ENCODE measurements at regions of chr3 and their contacts with region 1.

Region 1: GRCh38 chr3:132034486-132035464 is at the start of gene CPNE4:
- H3K4me3 ChIP-seq: peak within 1 kb of the TSS; percentile 45
- H3K27ac ChIP-seq: no peak within 1 kb of the TSS
- H3K4me1 ChIP-seq: no peaks in the 10 kb centered on the region; the same call in 1 of the 2 replicates
- CTCF ChIP-seq: peak; percentile 75; the same call in 1 of the 2 replicates

Region 2: GRCh38 chr3:131960324-131960723 is 74.5 kb before region 1 on chr3:
- CTCF ChIA-PET with region 1: no interaction called
- POLR2A ChIA-PET with region 1: no interaction called
- H3K4me3 ChIP-seq: no peak overlapping the region
- H3K27ac ChIP-seq: no peak overlapping the region
- H3K4me1 ChIP-seq: no peaks in the 10 kb centered on the region
- CTCF ChIP-seq: no peak

Region 3: GRCh38 chr3:132047209-132047608 is 12.4 kb after region 1 on chr3:
- CTCF ChIA-PET with region 1: interaction called, 10 read pairs
- POLR2A ChIA-PET with region 1: no interaction called
- H3K4me3 ChIP-seq: no peak overlapping the region
- H3K27ac ChIP-seq: no peak overlapping the region
- H3K4me1 ChIP-seq: no peaks in the 10 kb centered on the region
- CTCF ChIP-seq: no peak

Region 4: DNA sequence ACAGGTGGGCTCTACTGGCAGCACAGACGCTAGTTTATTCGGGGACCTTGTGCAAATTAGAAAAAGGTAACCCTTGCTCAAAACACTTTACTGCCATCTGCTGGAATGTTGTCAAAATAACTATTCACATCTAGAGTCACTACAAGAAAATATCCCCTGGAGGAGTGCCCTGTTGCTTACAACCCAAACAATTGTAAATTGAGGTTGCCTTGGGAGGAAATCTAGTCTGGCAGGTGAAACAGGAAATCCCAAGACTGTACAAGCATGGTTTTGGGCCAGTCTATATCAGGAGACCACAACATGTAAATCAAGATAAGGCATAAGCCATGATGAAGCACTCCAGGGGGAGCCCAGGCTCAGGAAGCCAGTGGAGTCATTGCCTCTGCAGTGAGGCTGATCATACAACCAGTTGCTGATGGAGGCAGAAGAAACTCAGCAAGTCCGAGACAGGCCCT is 145.6 kb after region 1 on chr3:
- CTCF ChIA-PET with region 1: interaction called, 31 read pairs
- POLR2A ChIA-PET with region 1: no interaction called
- H3K4me3 ChIP-seq: no peak overlapping the region
- H3K27ac ChIP-seq: no peak overlapping the region
- H3K4me1 ChIP-seq: no peaks in the 10 kb centered on the region
- CTCF ChIP-seq: peak; percentile 49

Region 5: DNA sequence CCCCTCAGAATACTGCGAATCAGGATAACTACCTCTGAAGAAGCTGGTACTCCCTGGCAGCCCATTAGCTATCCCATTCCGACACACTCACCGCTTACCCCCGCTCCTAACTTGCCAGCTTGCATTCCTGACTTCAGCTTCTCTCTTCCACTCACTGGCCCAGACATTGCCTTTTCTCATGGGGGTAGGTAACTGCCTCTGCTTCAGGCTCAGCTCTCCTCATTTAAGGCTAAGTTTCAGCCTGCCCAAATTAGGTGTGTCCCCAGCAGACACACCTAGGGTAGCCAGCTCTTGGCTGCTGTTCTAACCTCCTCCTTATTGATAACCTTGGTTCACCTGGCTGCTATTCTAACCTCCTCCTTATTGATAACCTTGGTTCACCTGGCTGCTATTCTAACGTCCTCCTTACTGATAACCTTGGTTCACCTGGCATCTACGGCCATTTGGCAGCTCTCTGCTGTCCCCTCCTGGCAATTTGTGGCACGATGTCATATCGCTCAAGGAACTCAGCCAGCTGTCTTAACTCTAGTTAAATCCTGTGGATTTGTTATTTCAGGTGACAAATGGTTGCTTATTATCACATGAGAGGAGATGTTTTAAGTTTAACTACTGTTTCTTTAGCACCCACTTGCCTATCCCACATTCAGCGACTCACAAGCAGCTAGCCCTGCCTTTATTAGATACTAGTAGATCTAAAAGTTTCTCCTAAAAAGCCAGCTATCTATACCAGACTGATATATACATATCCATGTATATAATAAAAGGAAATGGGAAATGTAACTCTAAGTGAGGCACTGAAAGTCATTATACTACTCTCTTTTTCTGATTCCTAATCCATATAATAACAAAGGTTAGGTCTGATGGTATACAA is 175.9 kb after region 1 on chr3:
- CTCF ChIA-PET with region 1: interaction called, 16 read pairs
- POLR2A ChIA-PET with region 1: no interaction called
- H3K4me3 ChIP-seq: no peak overlapping the region
- H3K27ac ChIP-seq: no peak overlapping the region
- H3K4me1 ChIP-seq: no peaks in the 10 kb centered on the region
- CTCF ChIP-seq: peak; percentile 39; the same call in 1 of the 2 replicates